ENCODE measurements at regions of chr2 and their contacts with region 1.

Region 1: GRCh38 chr2:100721693-100722092 is 98.2 kb upstream of the NPAS2 start:
- DNase-seq: no peak
- ATAC-seq: no peak
- H3K4me3 ChIP-seq: no peak overlapping the region
- H3K27ac ChIP-seq: no peak overlapping the region
- H3K4me1 ChIP-seq: peaks cover 0 to 3% (median 0%) of the 10 kb centered on the region in 12 donors
- H3K27me3 ChIP-seq: no peaks in the 10 kb centered on the region
- CTCF ChIP-seq: no peak
- POLR2A ChIP-seq: no peak

Region 2: DNA sequence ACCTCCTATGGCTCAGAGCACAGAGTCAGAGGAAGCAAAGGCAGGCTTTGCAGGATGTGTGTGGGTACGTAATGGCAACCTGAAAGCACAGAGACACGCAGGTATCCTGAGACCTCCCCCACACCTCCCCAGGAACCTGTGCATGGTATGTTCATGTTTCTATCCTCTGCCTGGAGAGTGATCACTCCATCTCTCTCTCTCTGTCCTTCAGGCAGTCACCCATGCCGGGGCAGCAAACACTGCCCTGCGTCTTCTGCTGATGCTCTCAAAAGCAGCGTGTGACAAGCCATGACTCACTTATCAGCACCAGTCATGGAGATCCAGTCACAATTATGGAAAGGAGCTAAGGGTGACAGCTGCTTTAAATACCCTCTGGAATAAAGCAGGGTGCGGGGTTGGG is 106.2 kb before region 1 on chr2:
- intact Hi-C with region 1: loop called in 5 of 10 experiments (anchors 5 to 10 kb)
- DNase-seq: peak in 3 of 5 donors; percentile 29 to 63 (median 52)
- ATAC-seq: peak; percentile 80 to 88 (median 87)
- H3K4me3 ChIP-seq: no peak overlapping the region
- H3K27ac ChIP-seq: peak overlapping the region in 3 of 12 donors; percentile 14 to 22 (median 20)
- H3K4me1 ChIP-seq: peaks cover 0 to 4% (median 0%) of the 10 kb centered on the region in 12 donors
- H3K27me3 ChIP-seq: no peaks in the 10 kb centered on the region
- CTCF ChIP-seq: no peak
- POLR2A ChIP-seq: no peak

Region 3: DNA sequence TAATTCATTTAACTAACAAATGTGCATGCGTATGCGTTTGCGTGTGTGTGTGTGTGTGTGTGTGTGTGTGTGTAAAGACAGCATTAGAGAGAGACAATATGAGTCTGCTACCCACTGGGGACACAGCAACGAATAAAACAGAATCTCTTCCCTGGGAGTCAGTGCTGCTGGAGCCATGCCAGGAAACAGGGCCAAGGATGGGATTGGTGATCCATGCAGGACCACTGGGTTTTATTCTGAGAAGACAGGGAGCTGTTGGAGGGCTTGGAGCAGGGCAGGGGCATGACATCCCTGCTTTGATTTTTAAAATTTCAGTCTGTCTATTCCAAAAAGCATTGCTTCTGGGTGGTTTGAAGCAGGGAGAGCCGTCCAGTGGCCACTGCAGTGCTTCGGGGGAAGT is 96.0 kb before region 1 on chr2:
- intact Hi-C with region 1: loop called in 1 of 10 experiments (anchors 10 kb)
- DNase-seq: no peak
- ATAC-seq: no peak
- H3K4me3 ChIP-seq: no peak overlapping the region
- H3K27ac ChIP-seq: no peak overlapping the region
- H3K4me1 ChIP-seq: no peaks in the 10 kb centered on the region
- H3K27me3 ChIP-seq: no peaks in the 10 kb centered on the region
- CTCF ChIP-seq: no peak
- POLR2A ChIP-seq: no peak

Region 4: DNA sequence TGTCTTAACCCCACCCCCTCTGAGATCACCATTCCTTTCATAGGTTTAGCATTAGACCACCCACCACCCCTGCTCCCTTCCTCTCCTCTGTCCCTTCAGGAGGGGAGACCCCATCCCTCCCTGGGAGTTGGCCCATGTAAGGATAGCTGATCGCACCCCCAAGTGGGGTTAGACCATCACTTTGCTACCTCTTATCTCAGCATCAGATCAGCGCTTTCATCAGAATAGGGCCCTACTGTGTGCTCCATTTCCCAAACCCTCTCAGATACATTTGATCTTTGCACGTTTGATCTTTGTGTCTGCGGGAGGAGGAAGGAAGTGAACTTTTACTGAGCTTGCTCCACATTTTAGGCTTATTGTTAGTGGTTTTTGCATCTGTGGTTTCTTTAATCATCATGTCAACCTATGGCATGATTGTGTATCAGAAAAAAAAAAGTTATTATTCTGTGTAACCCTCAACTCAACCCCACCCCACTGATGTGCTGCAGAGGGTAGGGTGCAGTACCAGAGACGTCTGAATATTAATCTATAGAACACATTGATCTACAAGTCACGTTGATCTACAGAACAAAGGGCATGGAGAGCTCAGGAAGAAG is 77.7 kb before region 1 on chr2:
- intact Hi-C with region 1: no loop called
- DNase-seq: no peak
- ATAC-seq: no peak
- H3K4me3 ChIP-seq: no peak overlapping the region
- H3K27ac ChIP-seq: no peak overlapping the region
- H3K4me1 ChIP-seq: no peaks in the 10 kb centered on the region
- H3K27me3 ChIP-seq: no peaks in the 10 kb centered on the region
- CTCF ChIP-seq: no peak
- POLR2A ChIP-seq: no peak

Region 5: DNA sequence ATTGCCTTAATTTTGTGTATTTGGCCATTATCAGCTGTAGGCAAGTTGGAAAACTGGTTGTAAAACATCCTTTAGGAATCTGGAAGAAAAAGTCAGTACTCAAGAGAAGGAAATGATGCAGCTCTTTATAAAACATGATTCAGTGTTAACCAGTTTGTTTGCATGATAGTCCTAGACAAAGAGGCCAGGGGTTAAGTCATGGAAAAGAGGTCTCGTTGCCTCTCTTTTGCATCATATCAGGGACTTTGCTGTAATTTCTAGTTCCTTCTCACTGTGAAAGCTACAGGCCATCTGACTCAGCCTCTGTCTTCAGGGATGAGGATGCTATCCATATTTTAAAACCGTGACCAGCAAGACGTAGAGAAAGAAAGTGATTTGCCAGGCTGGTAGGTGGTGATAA is 136.2 kb after region 1 on chr2:
- intact Hi-C with region 1: no loop called
- DNase-seq: no peak
- ATAC-seq: no peak
- H3K4me3 ChIP-seq: no peak overlapping the region
- H3K27ac ChIP-seq: peak overlapping the region in 2 of 12 donors; percentile 11 to 14
- H3K4me1 ChIP-seq: peaks cover 0 to 64% (median 19%) of the 10 kb centered on the region in 12 donors
- H3K27me3 ChIP-seq: no peaks in the 10 kb centered on the region
- CTCF ChIP-seq: no peak
- POLR2A ChIP-seq: no peak